Activated CD4-positive, alpha-beta memory T cell treated with anti-CD3 and anti-CD28 coated beads for 36 hours (primary cell): ENCODE measurements at regions of chr6 and their contacts with region 1.

Region 1: DNA sequence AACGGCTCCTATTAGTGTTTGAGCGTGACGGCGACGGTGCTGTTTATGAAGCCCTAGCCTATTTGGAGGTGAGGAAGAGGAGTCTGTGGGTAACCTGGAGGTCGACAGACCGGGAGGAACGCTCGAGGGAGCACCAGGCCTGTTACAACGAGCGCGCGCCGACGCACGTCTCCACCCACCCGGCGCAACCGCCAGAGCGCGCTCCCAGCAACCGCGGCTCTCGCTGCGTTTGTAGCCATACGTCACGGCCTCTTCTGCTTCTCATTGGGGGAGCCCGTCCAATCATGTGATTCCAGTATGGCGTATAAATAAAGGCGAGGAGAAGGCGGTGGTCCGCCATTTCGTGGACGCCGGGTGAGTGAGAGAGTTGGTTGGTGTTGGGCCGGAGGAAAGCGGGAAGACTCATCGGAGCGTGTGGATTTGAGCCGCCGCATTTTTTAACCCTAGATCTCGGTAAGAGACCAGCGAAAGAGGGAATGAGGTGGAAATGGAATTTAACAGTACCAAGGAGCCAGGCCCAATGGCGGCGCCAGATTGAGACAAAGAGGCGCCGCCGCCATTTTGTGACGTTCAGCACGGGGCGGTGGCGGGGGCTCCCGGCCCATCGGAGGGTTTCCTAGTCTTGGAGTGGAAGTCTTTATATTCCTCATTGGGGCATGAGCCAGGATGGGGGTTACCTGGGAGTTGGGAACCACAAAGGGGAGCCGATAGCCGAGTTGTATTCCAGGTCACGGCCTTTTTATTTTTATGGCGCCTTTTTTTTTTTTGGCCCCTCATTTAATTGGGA is at the start of gene SRSF3:
- DNase-seq: peak; percentile 97
- H3K4me3 Mint-ChIP-seq: peak within 1 kb of the TSS; percentile 96
- H3K27ac Mint-ChIP-seq: peak within 1 kb of the TSS; percentile 99
- H3K4me1 Mint-ChIP-seq: peaks cover 27% of the 10 kb centered on the region
- H3K27me3 Mint-ChIP-seq: peaks cover 2% of the 10 kb centered on the region
- total RNA-seq, gene SRSF3: 390 to 392 TPM

Region 2: GRCh38 chr6:36423101-36423824 is 171.0 kb before region 1 on chr6:
- CTCF ChIA-PET with region 1: interaction called, 7 read pairs
- POLR2A ChIA-PET with region 1: no interaction called
- intact Hi-C with region 1: loop called (anchors 1 kb)
- DNase-seq: peak; percentile 99
- H3K4me3 Mint-ChIP-seq: peak overlapping the region; percentile 80
- H3K27ac Mint-ChIP-seq: peak overlapping the region; percentile 84
- H3K4me1 Mint-ChIP-seq: peaks cover 17% of the 10 kb centered on the region
- H3K27me3 Mint-ChIP-seq: no peaks in the 10 kb centered on the region

Region 3: GRCh38 chr6:36442671-36443470 is 151.4 kb before region 1 on chr6 and contains the starts of genes KCTD20 and PXT1:
- CTCF ChIA-PET with region 1: no interaction called
- POLR2A ChIA-PET with region 1: interaction called, 4 read pairs
- intact Hi-C with region 1: loop called (anchors 2 kb)
- DNase-seq: peak; percentile 93
- H3K4me3 Mint-ChIP-seq: peak within 1 kb of the TSS; percentile 97
- H3K27ac Mint-ChIP-seq: peak within 1 kb of the TSS; percentile 97
- H3K4me1 Mint-ChIP-seq: peaks cover 34% of the 10 kb centered on the region
- H3K27me3 Mint-ChIP-seq: no peaks in the 10 kb centered on the region
- total RNA-seq, gene KCTD20: 48.0 to 51.0 TPM
- total RNA-seq, gene PXT1: 0.22 to 0.29 TPM

Region 4: GRCh38 chr6:36539814-36540568 is 54.2 kb before region 1 on chr6:
- CTCF ChIA-PET with region 1: no interaction called
- POLR2A ChIA-PET with region 1: interaction called, 22 read pairs
- intact Hi-C with region 1: loop called (anchors 1 kb)
- DNase-seq: peak; percentile 26
- H3K4me3 Mint-ChIP-seq: no peak overlapping the region
- H3K27ac Mint-ChIP-seq: peak overlapping the region; percentile 93
- H3K4me1 Mint-ChIP-seq: peaks cover 56% of the 10 kb centered on the region
- H3K27me3 Mint-ChIP-seq: no peaks in the 10 kb centered on the region

Region 5: DNA sequence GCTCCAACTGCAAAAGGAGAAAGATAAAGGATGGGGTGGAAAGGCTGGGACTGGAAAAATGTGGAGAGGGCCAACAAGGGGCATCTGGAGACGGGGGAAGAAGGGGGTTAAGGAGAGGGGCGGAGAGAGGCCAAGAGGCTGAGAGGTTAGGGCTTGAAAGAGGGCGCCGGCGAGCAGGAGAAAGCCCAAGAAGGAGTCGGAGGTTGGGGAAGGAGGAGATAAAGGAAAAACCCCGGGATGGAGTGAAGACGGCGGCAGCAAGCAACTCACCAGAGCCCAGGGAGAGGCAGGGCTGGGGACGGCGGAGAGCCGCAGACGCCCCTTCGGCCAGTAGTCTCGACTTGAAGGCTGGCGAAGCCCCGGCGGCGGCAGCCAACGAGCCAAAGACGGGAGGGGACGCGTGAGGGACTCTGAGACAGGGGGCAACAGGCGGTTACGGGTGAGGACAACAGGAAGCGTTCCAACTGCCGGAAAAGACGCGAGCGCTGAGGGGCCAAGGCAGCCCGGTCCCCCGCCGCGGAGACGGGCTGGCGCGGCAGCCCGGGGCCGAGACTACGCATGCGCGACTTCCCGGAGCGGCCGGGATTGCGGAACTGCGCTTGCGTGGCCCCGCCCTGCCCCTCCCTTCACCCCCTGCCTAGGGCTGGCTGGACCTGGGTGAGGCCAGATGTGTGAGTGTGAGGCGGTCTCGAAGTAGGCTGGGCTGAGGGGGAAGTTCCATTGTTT is 47.1 kb before region 1 on chr6 and contains the start of gene STK38:
- CTCF ChIA-PET with region 1: no interaction called
- POLR2A ChIA-PET with region 1: interaction called, 22 read pairs
- intact Hi-C with region 1: loop called (anchors 1 kb)
- DNase-seq: peak; percentile 97
- H3K4me3 Mint-ChIP-seq: peak within 1 kb of the TSS; percentile 96
- H3K27ac Mint-ChIP-seq: peak within 1 kb of the TSS; percentile 97
- H3K4me1 Mint-ChIP-seq: peaks cover 41% of the 10 kb centered on the region
- H3K27me3 Mint-ChIP-seq: no peaks in the 10 kb centered on the region
- total RNA-seq, gene STK38: 25.8 to 27.5 TPM

Region 6: DNA sequence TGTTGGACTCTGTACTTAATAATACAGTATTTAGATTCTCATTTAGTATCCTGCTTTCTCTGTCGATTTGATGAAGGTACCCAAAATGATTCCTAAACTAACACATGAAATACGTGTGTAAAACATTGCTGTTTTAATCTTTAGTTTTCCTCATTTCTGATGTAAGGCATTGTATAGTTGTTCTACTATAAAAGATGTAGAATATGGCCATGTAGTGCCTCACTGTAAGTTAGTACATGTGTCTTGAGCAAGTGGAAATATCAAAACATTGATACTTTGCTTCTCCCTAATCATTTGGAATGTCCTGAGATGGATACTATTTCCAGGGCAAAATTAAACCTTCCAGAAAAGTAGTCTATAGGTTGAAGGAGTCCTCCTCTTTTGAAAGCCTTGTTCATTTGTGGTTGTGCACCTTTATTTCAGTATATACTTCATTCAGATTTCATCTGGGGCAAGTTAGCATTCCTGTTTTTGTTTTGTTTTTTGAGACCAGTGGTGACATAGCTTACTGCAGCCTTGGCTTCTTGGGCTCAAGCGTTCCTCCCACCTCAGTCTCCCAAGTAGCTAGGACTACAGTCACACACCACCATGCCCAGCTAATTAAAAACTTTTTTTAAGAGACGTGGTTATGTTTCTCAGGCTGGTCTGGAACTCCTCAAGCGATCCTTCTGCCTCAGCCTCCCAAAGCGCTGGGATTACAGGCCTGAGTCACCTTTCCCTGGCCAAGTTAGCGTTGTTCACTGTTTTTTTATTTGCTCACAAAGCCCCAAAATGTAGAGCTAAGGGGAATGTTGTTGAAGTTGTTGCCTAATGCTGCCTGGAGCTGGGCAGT is 11.6 kb after region 1 on chr6:
- CTCF ChIA-PET with region 1: no interaction called
- POLR2A ChIA-PET with region 1: interaction called, 73 read pairs
- intact Hi-C with region 1: no loop called
- DNase-seq: no peak
- H3K4me3 Mint-ChIP-seq: peak overlapping the region; percentile 2
- H3K27ac Mint-ChIP-seq: peak overlapping the region; percentile 65
- H3K4me1 Mint-ChIP-seq: peaks cover 74% of the 10 kb centered on the region
- H3K27me3 Mint-ChIP-seq: no peaks in the 10 kb centered on the region

Region 7: GRCh38 chr6:36985808-36986703 is 391.8 kb after region 1 on chr6 and contains the start of gene MTCH1:
- CTCF ChIA-PET with region 1: no interaction called
- POLR2A ChIA-PET with region 1: no interaction called
- intact Hi-C with region 1: loop called (anchors 10 kb)
- DNase-seq: peak; percentile 90
- H3K4me3 Mint-ChIP-seq: peak within 1 kb of the TSS; percentile 99
- H3K27ac Mint-ChIP-seq: peak within 1 kb of the TSS; percentile 90
- H3K4me1 Mint-ChIP-seq: peaks cover 18% of the 10 kb centered on the region
- H3K27me3 Mint-ChIP-seq: no peaks in the 10 kb centered on the region
- total RNA-seq, gene MTCH1: 109 to 114 TPM